ACHN (cell line): ENCODE measurements at regions of chr1 and their contacts with region 1.

Region 1: DNA sequence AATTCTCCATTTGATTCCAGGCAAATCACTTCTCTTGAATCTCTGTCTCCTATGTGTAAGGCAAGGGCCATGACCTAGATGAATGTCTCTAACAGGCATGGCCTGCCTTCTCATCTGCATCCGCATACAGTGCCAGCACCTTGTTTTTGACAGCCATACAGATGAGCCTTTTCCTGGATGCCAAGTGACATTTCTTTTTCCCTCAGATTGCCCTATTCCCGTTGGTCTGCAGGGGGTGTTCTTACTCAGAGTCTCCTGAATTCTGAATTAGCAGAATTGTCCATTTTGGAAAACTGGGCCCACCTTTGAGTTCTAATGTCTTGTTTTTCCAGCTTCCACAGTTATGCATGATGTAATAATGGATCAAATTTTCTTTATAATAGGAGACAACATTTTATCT is 88.0 kb upstream of the ADAR start:
- DNase-seq: peak; percentile 6

Region 2: GRCh38 chr1:154589780-154590179 is 106.2 kb before region 1 on chr1:
- in situ Hi-C with region 1: no loop called
- DNase-seq: no peak

Region 3: GRCh38 chr1:154791292-154792166 is 95.5 kb after region 1 on chr1:
- in situ Hi-C with region 1: loop called (anchors 25 kb)
- DNase-seq: peak; percentile 48

Region 4: DNA sequence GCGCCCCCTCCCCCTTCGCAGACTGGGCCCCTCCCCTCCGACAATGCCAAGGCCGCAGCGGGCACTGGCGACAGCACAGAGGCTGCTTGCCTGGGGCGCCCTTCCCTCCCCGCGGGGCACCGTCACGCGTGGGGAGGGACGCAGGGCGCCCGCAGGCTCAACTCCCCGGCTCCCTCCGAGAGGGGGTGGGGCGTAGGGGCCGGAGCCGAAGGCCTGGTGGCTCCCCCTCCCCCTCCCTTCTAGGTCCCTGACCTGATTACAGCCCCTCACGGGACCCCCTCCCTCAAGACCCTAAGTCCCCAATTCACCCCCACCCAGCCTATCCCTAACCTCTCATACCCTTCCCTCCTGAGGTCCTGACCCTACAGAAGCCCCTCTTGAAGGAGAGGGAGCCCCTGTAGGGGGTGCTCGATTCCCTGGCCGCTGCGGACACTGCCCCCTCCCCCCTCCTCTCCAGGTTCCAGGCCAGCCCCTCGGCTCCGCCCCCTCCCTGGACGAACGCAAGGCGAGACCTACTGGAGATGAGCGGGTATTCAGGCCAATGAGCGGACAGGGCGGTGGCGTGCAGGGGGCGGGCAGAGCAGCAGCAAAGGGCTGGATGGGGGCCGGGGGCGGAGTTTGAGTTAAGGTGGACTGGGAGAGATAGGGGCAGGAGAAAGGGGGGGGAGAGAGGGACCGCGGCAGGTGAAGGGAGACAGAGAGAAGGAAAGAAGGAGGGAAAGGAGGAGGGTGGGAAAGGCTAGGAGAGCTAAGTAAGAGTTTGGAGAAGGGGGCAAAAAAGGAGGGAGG is 305.9 kb after region 1 on chr1:
- in situ Hi-C with region 1: no loop called
- DNase-seq: peak; percentile 99